ENCODE measurements at regions of chr10 and their contacts with region 1.

Region 1: GRCh38 chr10:71314028-71314693 is 4.9 kb upstream of the SLC29A3 start:
- DNase-seq: peak; percentile 86
- H3K4me3 Mint-ChIP-seq: peak overlapping the region; percentile 28
- H3K27ac Mint-ChIP-seq: no peak overlapping the region
- H3K4me1 Mint-ChIP-seq: peaks cover 27% of the 10 kb centered on the region
- H3K27me3 Mint-ChIP-seq: peaks cover 11% of the 10 kb centered on the region

Region 2: GRCh38 chr10:71372882-71373495 is 58.8 kb after region 1 on chr10:
- intact Hi-C with region 1: loop called (anchors 1 kb)
- DNase-seq: no peak
- H3K4me3 Mint-ChIP-seq: no peak overlapping the region
- H3K27ac Mint-ChIP-seq: no peak overlapping the region
- H3K4me1 Mint-ChIP-seq: peaks cover 4% of the 10 kb centered on the region
- H3K27me3 Mint-ChIP-seq: peaks cover 8% of the 10 kb centered on the region

Region 3: DNA sequence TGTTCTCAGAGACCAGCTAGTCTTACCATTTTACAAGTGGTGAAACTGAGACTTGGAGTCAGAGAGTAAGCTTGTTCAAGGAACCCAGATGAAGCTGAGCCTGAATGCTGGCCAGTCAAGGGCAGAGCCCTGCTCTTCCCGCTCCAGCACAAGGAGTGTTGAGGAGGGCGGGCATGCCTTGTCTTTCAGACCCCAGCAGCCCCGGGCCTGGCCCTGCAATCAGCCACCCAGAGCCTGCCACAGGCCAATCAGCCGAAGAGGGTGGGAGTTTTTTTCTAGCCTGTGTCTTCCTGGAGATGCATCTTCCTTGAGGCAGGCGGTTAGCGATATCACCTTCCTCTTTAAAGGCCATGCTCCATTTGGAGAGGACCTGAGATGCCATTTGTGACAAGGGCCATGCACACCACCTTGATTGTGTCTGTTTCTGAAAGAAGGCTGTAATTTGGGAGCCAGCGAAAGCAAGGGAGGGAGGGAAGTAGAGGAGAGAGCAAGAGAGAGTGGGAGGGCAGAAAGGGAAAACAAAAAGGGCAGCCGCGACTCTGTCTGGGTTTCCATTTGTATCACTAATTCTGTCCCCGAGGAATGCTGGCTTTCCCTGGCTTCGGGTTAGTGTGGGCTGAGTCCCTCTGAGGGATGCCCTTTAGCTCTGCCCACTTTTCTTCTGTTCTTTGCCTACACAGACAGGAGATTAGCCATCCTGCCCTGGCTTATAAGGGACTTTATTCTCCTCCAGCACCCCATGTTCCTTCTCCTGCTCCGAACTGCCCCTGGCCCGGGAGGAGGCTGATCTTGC is 90.5 kb after region 1 on chr10:
- intact Hi-C with region 1: no loop called
- DNase-seq: no peak
- H3K4me3 Mint-ChIP-seq: no peak overlapping the region
- H3K27ac Mint-ChIP-seq: no peak overlapping the region
- H3K4me1 Mint-ChIP-seq: no peaks in the 10 kb centered on the region
- H3K27me3 Mint-ChIP-seq: peaks cover 16% of the 10 kb centered on the region

Region 4: GRCh38 chr10:71569775-71570588 is 255.8 kb after region 1 on chr10:
- intact Hi-C with region 1: loop called (anchors 1 kb)
- DNase-seq: peak; percentile 93
- H3K4me3 Mint-ChIP-seq: no peak overlapping the region
- H3K27ac Mint-ChIP-seq: no peak overlapping the region
- H3K4me1 Mint-ChIP-seq: peaks cover 3% of the 10 kb centered on the region
- H3K27me3 Mint-ChIP-seq: no peaks in the 10 kb centered on the region

Region 5: GRCh38 chr10:71608819-71609768 is 294.9 kb after region 1 on chr10:
- intact Hi-C with region 1: loop called (anchors 1 kb)
- DNase-seq: peak; percentile 87
- H3K4me3 Mint-ChIP-seq: no peak overlapping the region
- H3K27ac Mint-ChIP-seq: no peak overlapping the region
- H3K4me1 Mint-ChIP-seq: peaks cover 4% of the 10 kb centered on the region
- H3K27me3 Mint-ChIP-seq: peaks cover 3% of the 10 kb centered on the region

Region 6: GRCh38 chr10:71696628-71697326 is 382.6 kb after region 1 on chr10:
- intact Hi-C with region 1: loop called (anchors 2 kb)
- DNase-seq: peak; percentile 90
- H3K4me3 Mint-ChIP-seq: no peak overlapping the region
- H3K27ac Mint-ChIP-seq: no peak overlapping the region
- H3K4me1 Mint-ChIP-seq: peaks cover 39% of the 10 kb centered on the region
- H3K27me3 Mint-ChIP-seq: no peaks in the 10 kb centered on the region

Region 7: DNA sequence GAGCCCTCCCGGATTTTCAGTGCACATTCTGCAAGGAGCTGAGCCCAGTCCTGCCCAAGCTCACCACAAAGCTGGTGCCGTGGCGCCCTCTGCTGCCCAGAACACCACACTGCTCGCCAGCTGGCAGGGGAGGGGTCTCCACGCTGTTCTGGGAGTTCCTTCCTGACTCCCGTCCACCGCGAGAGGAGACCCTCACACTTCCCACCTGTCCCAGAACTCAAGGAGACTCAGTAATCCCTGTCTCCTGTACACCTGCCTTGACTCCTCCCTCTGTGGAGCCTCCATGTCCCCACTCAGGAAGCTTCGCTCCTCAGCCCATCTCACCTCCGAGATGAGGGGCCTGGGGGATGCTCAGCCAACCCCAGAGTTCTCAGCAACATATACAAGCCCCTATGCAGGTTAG is 394.1 kb after region 1 on chr10:
- intact Hi-C with region 1: loop called (anchors 2 kb)
- DNase-seq: peak; percentile 91
- H3K4me3 Mint-ChIP-seq: no peak overlapping the region
- H3K27ac Mint-ChIP-seq: no peak overlapping the region
- H3K4me1 Mint-ChIP-seq: peaks cover 34% of the 10 kb centered on the region
- H3K27me3 Mint-ChIP-seq: no peaks in the 10 kb centered on the region

Region 8: DNA sequence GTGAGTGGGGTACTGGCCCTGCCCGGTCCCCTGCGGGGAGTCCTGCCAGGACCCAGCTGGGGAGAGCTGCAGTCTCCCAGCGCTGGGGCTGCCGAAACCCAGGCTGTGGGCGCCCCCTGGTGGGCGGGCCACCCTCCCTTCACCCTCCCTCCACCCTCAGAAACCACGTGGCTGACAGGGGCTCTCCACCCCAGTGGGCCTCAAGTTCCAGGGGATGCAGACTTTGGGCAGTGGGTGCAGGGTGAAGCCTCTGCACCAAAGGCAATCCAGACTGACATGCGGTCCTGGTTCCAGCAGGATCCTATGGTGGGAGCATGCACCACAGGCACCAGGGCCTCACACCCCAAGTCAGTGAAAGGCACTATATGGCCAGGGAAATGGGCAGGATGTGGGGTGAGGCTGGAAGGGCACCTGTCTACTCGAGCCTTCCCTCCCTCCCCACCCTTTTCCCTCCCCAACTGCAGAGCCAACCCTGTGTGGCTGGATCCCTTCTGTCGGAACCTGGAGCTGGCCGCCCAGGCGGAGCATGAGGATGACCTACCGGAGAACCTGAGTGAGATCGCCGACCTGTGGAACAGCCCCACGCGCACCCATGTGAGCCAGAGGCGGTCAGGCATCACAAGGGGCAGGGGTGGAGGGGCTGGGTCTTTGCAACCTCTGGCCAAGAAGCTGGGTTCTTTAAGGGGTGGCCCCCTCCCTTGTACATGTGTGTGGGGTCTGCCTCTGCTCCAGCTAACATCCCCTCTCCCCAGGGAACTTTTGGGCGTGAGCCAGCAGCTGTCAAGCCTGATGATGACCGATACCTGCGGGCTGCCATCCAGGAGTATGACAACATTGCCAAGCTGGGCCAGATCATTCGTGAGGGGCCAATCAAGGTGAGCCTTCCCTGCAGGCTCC is 498.1 kb after region 1 on chr10:
- intact Hi-C with region 1: loop called (anchors 5 kb)
- DNase-seq: peak; percentile 92
- H3K4me3 Mint-ChIP-seq: no peak overlapping the region
- H3K27ac Mint-ChIP-seq: peak overlapping the region; percentile 11
- H3K4me1 Mint-ChIP-seq: peaks cover 2% of the 10 kb centered on the region
- H3K27me3 Mint-ChIP-seq: no peaks in the 10 kb centered on the region

Measured in activated CD4-positive, alpha-beta T cell treated with anti-CD3 and anti-CD28 coated beads, Interleukin-2, amount 10 ng/mL, durations not matched to agents 24 days and 14 days (primary cell).